ENCODE measurements at regions of chr1 and their contacts with region 1.

Region 1: DNA sequence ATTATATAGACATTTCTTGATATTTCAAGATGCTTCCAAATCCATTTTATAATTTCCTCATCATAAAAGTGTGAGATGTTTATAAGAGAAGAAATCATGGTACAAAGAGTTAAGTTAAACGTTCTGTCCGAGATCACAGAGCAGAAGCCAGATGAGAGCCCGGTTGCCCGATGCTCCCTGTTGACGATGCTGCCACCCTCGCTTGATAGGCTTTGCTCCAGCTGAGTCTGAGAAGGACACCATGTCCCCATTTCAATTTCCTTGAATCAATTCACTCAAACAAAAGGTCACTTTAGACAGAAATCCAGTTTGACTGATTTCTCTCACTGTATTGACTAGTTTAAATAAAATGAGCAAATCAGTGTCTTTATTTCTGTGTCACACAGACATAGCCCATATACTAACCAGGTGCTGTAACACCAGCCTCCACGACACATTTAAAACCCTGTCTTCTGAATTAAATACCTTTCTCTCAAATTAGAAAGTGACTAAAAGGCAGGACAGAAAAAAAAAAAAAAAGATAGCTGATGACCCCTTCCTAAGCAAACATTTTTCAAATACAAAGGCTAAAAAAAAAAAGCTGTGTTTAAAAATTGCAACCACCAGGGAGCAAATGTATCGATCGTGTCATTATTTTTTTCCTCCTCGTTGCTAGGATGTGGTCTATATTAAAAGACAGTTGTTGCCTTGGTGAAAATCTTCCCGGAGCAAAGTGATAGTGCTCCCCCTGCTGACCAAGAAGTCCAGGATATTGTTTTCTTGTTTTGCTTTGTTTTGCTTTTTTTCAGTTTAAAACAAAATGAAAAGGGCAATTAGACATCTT is 35.2 kb downstream of the DNASE2B start:
- DNase-seq: peak; percentile 47
- CTCF ChIP-seq: peak; percentile 49

Region 2: GRCh38 chr1:83929184-83929583 is 504.3 kb before region 1 on chr1:
- in situ Hi-C with region 1: loop called (anchors 10 kb)
- DNase-seq: no peak
- CTCF ChIP-seq: no peak

Region 3: GRCh38 chr1:84020151-84020550 is 413.3 kb before region 1 on chr1:
- in situ Hi-C with region 1: no loop called
- DNase-seq: no peak
- CTCF ChIP-seq: no peak

Region 4: GRCh38 chr1:84143796-84144565 is 289.5 kb before region 1 on chr1 and contains the start of gene PRKACB:
- in situ Hi-C with region 1: loop called (anchors 10 kb)
- DNase-seq: peak; percentile 19
- CTCF ChIP-seq: no peak

Region 5: DNA sequence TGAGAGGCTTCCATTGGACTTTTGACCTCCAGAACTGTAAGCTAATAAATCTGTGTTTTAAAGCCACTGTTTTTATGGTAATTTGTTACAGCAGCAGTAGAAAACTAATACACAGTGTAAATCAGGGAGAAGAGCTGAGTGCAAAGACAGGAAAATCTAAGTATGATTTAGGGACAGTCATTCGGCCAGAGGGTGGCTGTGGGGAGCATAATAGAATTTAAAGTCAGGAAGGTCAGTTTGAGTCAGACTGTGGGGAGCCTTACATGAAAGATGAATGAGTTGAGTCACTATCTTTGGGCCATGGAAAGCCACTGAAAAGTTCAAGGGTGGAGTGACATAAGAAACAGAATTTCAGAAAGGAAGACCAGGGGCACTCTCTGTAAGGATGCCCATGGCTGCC is 309.2 kb after region 1 on chr1:
- in situ Hi-C with region 1: loop called (anchors 10 kb)
- DNase-seq: no peak
- CTCF ChIP-seq: no peak

Measured in GM13976 (cell line).